WTC11 (cell line): ENCODE measurements at regions of chr12 and their contacts with region 1.

Region 1: DNA sequence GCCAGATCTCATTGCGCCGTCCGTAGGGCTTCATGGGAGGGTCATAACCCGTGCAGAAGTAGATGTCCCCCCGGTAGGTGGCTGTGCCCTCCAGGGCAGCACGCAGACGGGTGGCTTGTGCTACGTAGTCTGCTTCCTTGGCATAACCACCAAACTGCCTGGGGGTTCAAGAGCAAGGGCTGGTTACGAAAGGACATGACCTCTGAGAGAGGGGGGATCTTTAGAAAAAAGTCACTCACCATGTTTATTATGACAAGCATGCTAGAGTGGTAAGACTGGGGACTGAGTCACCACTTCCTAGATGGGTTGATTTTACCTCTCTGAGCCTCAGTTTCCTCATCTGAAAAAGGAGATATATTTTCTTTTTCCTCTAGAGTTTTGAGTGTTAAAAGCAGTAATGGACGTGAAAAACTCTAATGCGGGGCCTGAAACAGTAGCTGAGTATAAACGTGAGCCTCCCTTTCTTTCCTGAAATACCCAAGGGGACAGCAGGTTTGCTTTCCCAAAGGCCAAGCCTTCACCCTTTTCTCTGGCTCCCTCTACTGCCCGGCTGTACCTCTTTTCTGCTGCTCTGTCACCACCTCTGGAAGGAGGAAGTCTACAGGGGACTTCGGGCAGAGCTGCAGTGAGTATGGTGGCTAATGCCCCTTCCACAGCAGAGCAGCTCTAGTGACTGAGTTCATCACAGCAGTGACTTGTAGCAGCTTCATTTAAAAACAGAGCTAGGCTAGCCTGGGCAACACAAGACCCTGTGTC is 23.5 kb upstream of the GPRC5D start:
- DNase-seq: peak; percentile 62
- ATAC-seq: peak; percentile 99
- H3K4me3 Mint-ChIP-seq: no peak overlapping the region
- H3K27ac Mint-ChIP-seq: no peak overlapping the region
- H3K4me1 Mint-ChIP-seq: no peaks in the 10 kb centered on the region
- H3K27me3 Mint-ChIP-seq: peaks cover 3% of the 10 kb centered on the region; the same call in 1 of the 2 replicates
- CTCF ChIP-seq: no peak

Region 2: GRCh38 chr12:12654691-12655460 is 320.6 kb before region 1 on chr12:
- CTCF ChIA-PET with region 1: no interaction called
- POLR2A ChIA-PET with region 1: no interaction called
- DNase-seq: no peak
- ATAC-seq: no peak
- H3K4me3 Mint-ChIP-seq: no peak overlapping the region
- H3K27ac Mint-ChIP-seq: no peak overlapping the region
- H3K4me1 Mint-ChIP-seq: peaks cover 28% of the 10 kb centered on the region
- H3K27me3 Mint-ChIP-seq: 0 out of 2 replicates have a peak, but pooled peaks cover 4% of the 10 kb centered on the region
- CTCF ChIP-seq: no peak

Region 3: DNA sequence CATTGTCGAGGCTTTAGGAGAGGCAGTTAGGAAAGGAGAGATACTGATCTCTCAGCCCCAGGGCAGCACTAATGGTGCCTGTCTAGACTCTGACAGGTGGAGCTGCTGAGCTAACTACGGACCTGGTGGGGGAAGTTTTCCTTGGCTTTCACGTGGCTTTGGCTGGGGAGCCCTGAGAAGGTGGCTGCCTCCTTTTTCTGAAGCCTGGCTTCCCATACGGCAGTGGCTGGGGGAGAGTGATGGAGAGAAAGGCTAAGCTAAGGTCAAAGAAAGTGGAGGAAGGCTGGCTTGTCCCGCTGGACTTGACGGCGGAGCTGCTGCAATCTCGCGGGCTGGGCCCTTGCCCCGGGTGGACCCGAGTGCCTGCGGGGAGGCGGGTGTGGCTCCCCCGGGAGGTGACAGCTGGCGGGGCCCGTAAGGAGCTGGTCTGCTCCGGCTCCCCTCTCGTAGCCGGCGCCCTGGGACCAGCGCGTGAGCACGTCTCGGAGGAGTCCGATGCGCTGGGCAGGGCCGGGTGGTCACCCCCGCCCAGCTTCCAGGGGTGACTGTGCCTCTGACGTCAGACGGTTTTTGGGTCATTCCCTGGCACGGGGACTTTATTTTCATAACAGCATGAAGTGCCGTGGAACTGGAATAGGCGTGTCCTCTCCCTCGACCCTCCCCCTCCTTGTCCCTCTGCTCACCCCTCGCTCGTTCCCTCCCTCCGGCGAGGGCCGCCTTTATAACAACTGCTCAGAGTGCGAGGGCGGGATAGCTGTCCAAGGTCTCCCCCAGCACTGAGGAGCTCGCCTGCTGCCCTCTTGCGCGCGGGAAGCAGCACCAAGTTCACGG is 84.5 kb before region 1 on chr12 and contains the start of gene GPRC5A:
- CTCF ChIA-PET with region 1: interaction called, 10 read pairs
- POLR2A ChIA-PET with region 1: no interaction called
- DNase-seq: peak; percentile 55
- ATAC-seq: peak; percentile 80
- H3K4me3 Mint-ChIP-seq: peak within 1 kb of the TSS; percentile 84
- H3K27ac Mint-ChIP-seq: no peak within 1 kb of the TSS
- H3K4me1 Mint-ChIP-seq: peaks cover 32% of the 10 kb centered on the region
- H3K27me3 Mint-ChIP-seq: peaks cover 69% of the 10 kb centered on the region
- CTCF ChIP-seq: no peak
- total RNA-seq, gene GPRC5A: 1.1 to 1.3 TPM (median 1.3 TPM) in 3 replicates

Region 4: DNA sequence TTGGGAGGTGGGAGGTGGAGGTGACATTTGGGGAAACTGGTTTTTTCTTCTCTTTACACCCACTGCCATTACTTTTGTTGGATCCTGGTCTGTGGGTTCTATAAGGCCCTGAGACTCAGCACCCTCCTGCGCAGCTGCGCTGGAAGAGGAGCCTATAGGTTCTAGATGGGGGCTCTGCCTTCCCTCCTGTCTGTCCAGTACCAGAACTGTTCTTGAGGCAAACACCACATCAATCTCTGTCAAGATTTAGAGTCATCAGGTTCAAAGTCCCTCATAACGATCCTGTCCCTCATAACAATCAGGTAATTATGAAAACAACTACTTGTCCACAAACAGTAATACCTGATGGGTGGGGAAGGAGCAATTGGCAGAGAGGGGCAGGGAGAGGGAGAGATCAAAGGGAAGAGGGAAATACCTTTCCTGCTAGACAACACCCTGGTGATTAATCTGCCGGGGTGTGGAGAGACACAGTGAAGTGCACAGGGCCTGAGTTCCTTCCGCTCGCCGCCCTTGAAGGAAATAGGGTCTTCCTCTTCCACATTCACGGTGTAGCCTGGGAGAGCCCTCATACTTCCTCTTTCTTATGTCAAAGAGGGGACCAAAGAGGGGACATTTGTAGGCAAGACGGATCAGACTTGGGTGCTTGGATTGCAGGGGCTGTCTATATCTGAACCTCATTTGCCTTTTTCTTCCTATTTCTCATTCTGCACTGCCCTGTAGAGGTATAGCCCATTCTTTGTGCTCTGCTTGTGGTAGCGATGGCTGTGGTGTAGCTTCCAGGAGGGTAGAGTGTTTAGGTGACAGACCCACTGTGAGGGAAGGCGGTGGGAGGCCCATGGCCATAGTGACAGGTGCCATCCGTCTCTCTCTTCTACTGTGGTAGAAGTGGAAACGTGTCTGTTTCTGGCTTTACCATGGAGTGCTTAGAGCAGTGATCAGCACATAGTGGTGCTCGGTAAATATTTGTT is 71.6 kb before region 1 on chr12:
- CTCF ChIA-PET with region 1: no interaction called
- POLR2A ChIA-PET with region 1: no interaction called
- DNase-seq: no peak
- ATAC-seq: no peak
- H3K4me3 Mint-ChIP-seq: no peak overlapping the region
- H3K27ac Mint-ChIP-seq: no peak overlapping the region
- H3K4me1 Mint-ChIP-seq: no peaks in the 10 kb centered on the region
- H3K27me3 Mint-ChIP-seq: no peaks in the 10 kb centered on the region; the same call in 1 of the 2 replicates
- CTCF ChIP-seq: no peak

Region 5: DNA sequence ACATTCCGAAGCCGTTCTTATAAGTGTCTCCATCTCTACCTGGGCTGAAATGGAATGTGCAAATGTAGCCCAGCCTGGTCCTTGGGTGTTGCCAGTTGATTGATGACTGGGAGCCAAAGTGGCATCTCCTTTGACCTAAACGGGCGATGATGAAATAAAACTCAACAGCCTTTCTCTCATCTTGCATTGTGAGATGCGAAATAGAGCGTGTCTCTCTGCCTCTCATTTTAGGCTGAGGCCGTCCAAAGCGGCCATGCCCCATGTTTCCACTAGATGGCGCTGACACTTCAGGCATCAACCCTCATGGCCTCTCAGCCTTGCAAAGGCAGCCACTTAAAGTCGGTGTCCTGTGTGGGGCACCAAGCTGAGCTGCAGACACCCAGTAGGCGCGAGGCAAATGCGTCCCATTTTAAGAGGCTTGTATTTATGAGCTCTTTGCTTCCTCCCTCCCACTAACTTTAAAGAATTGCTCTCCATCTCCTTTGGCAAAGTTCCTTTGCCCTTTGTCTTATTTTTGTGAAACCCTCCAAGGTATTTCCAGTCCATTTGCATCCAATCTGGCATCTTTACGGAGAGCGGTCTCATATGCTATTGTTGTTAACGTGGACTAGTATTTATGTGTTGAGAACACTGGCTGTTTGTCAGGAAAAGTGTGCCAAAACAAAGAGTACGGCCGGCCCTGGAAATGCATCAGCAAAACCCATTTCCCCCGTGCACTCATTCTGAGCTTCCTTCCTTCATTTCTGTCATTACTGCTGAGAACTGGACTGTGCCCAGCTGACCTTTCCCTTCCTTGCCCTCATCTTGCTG is 59.2 kb before region 1 on chr12:
- CTCF ChIA-PET with region 1: interaction called, 33 read pairs
- POLR2A ChIA-PET with region 1: interaction called, 3 read pairs
- DNase-seq: peak; percentile 90
- ATAC-seq: peak; percentile 88
- H3K4me3 Mint-ChIP-seq: no peak overlapping the region
- H3K27ac Mint-ChIP-seq: no peak overlapping the region
- H3K4me1 Mint-ChIP-seq: peaks cover 27% of the 10 kb centered on the region
- H3K27me3 Mint-ChIP-seq: peaks cover 3% of the 10 kb centered on the region
- CTCF ChIP-seq: peak; percentile 98

Region 6: DNA sequence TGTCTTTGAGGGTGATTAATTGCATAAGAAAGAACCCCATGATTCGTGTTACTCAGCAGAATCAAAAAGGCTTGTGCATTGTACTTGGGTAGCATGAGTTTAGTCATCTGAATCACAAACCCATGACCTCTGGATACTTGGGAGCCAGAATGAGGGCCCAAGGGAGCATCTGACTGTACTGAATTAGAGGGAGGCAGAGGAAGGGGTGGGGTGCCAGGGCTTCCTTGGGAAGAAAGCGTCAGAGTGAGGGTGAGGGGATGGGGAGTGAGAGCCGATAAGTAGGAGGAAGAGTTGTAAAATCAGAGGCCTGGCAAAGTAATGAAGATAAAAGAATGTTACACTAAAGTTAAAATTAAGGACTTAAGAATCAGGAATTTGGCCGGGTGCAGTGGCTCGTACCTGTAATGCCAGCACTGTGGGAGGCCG is 53.3 kb before region 1 on chr12:
- CTCF ChIA-PET with region 1: interaction called, 33 read pairs
- POLR2A ChIA-PET with region 1: no interaction called
- DNase-seq: no peak
- ATAC-seq: no peak
- H3K4me3 Mint-ChIP-seq: no peak overlapping the region
- H3K27ac Mint-ChIP-seq: no peak overlapping the region
- H3K4me1 Mint-ChIP-seq: peaks cover 12% of the 10 kb centered on the region
- H3K27me3 Mint-ChIP-seq: peaks cover 3% of the 10 kb centered on the region; the same call in 1 of the 2 replicates
- CTCF ChIP-seq: no peak

Region 7: DNA sequence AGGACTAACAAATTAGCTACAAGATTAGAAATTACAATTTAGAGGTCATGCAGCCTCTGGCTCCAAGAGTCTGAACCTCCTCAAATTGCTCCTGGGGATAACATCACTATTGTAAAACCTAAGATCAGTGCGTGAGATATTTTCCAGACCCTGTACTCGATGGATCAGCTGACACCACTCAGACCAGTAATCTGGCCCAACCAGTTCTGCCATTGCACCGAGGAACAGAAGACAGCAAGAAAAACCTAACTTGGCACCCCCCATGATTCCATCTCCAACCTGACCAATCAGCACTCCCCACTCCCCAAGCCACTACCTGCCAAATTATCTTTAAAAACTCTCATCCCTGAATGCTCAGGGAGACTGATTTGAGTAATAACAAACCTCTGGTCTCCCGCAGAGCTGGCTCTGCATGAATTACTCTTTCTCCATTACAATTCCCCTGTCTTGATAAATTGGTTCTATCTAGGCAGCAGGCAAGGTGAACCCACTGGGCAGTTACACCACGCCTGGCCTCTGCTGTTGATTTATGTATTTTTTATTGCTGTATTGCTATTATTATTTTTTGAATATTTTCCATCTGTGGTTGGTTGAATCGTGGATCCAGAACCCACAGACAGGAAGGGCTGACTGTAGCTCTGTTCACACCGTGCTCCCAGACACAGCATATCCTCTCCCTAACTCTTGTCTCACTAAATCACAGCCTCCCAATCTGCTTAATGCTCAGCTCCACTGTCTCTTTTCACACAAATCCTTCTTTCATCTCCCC is 15.4 kb after region 1 on chr12:
- CTCF ChIA-PET with region 1: interaction called, 26 read pairs
- POLR2A ChIA-PET with region 1: no interaction called
- DNase-seq: peak; percentile 26
- ATAC-seq: peak; percentile 38
- H3K4me3 Mint-ChIP-seq: peak overlapping the region; percentile 39
- H3K27ac Mint-ChIP-seq: peak overlapping the region; percentile 73
- H3K4me1 Mint-ChIP-seq: peaks cover 45% of the 10 kb centered on the region
- H3K27me3 Mint-ChIP-seq: no peaks in the 10 kb centered on the region
- CTCF ChIP-seq: no peak

Region 8: DNA sequence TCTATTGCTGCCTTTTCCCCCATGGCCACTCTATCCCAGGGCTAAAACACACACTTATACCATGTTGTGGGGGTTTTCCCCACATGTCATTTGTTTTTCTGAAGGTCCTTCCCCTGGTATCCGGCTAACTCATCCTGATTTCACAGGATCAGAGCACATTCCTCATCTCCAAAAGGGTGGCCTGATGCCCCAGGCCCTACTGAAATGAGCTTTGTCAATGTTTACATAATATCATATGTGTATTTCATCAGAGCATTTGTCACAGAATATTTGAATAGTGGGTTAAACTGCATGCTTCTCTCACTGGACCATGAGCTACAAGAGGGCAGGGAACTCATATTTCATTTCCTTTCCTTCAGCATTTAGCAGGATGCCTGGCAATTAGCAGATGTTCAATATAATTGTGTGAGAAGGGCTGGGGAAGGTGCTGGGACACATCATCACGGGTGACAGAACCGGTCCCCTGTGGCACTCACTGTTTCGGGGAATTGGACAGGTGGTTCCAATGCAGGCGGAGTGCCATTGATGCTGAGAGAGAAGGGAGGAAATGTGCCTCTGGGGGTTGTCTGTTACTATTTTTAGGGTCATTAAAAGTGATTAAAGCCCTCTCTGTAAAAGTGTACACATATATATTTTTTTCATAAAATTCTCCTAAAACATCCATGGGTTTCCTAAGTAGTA is 247.8 kb after region 1 on chr12:
- CTCF ChIA-PET with region 1: interaction called, 3 read pairs
- POLR2A ChIA-PET with region 1: interaction called, 14 read pairs
- DNase-seq: no peak
- ATAC-seq: no peak
- H3K4me3 Mint-ChIP-seq: no peak overlapping the region
- H3K27ac Mint-ChIP-seq: no peak overlapping the region
- H3K4me1 Mint-ChIP-seq: no peaks in the 10 kb centered on the region
- H3K27me3 Mint-ChIP-seq: no peaks in the 10 kb centered on the region; the same call in 1 of the 2 replicates
- CTCF ChIP-seq: no peak

Region 9: GRCh38 chr12:13273850-13274249 is 298.4 kb after region 1 on chr12:
- CTCF ChIA-PET with region 1: no interaction called
- POLR2A ChIA-PET with region 1: no interaction called
- DNase-seq: no peak
- ATAC-seq: no peak
- H3K4me3 Mint-ChIP-seq: no peak overlapping the region
- H3K27ac Mint-ChIP-seq: no peak overlapping the region
- H3K4me1 Mint-ChIP-seq: peaks cover 29% of the 10 kb centered on the region
- H3K27me3 Mint-ChIP-seq: no peaks in the 10 kb centered on the region; the same call in none of the 2 replicates
- CTCF ChIP-seq: no peak